CD4-positive, alpha-beta T cell (primary cell): ENCODE measurements at regions of chr6 and their contacts with region 1.

Region 1: DNA sequence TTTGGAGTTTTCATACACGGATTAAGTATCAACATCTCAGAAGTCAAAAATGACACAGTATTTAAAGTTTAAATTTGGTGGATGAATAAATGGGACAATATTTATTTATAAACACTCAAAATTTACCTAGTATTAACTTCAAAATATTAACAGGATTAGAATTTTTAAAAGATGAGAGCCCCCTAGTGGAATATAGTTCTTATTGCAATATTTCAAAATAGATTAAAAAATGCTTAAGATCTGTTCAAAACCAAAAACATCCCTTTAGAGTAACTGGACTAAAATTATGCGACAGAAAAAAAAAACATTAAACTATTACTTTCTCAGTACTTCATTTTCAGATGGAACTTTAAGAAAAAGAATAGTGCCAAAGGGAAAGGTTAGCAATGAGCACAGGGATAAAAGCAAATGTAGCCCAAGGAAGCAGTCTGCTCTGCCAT is 56.6 kb downstream of the SNX14 start:
- DNase-seq: peak in 2 of 14 experiments; percentile 3 to 26
- ATAC-seq: no peak
- H3K4me3 ChIP-seq: no peak overlapping the region
- H3K4me3 Mint-ChIP-seq: no peak overlapping the region
- H3K27ac ChIP-seq: no peak overlapping the region
- H3K27ac Mint-ChIP-seq: no peak overlapping the region
- H3K4me1 ChIP-seq: no peaks in the 10 kb centered on the region
- H3K4me1 Mint-ChIP-seq: no peaks in the 10 kb centered on the region
- H3K27me3 ChIP-seq: no peaks in the 10 kb centered on the region
- H3K27me3 Mint-ChIP-seq: no peaks in the 10 kb centered on the region
- CTCF ChIP-seq: peak; percentile 88

Region 2: DNA sequence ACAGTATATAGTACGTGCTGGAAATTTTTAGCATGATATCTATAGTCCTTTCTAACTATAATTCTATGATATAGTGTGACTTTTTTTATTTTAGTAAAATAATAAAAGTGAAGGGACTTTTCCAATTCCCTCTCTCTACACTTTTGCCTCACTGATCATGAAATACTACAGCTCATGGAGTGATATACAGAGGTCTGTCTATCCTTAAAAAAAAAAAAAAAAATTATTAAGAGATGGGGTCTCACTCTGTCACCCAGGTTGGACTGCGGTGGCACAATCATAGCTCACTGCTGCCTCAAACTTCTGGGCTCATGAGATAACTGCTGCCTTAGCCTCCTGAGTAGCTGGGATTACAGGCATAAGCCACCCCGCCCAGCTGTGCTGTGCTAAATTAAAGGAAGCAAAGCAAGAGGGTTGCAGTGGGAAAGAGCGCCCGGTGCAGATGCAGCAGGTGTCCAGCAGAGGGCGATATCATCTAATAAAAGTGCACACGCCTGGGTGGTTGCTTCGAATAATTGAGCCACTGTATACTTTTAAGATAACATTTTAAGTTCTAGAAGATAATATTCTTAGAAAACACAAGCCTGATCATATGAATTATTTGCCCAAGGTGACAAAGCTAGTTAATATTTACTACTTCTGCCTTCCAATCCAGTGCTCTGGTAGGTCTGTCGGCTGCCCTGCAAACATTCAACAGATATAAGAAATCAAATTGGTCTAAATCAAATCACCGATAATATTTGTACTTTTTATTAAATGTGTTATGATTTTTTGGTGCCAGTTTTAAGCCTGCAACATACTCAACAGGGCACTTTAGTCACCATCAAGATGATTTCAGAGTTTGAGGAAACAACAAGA is 182.1 kb before region 1 on chr6:
- CTCF ChIA-PET with region 1: no interaction called
- POLR2A ChIA-PET with region 1: no interaction called
- intact Hi-C with region 1: loop called (anchors 2 to 5 kb)
- DNase-seq: peak; percentile 12 to 64 (median 35)
- ATAC-seq: peak; percentile 49
- H3K4me3 ChIP-seq: no peak overlapping the region
- H3K4me3 Mint-ChIP-seq: no peak overlapping the region
- H3K27ac ChIP-seq: no peak overlapping the region
- H3K27ac Mint-ChIP-seq: no peak overlapping the region
- H3K4me1 ChIP-seq: no peaks in the 10 kb centered on the region
- H3K4me1 Mint-ChIP-seq: no peaks in the 10 kb centered on the region
- H3K27me3 ChIP-seq: no peaks in the 10 kb centered on the region
- H3K27me3 Mint-ChIP-seq: no peaks in the 10 kb centered on the region
- CTCF ChIP-seq: peak; percentile 96

Region 3: DNA sequence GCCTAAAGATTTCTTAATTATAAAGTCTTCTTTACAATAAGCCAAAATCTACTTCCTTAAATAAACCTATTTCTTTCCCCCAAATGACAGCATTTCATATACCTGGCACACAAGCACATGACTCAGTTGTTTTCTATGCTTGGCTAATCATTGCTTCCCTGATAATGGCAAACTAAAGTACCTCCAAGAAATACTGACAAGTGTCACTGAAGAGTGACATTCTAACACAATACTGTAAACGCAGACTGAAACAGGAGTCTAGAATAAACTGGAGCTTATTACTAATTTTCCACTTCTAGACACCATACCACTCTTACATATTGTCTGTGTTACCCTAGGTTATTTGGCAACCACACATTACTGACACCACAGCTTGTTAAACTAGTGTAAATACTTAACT is 91.3 kb after region 1 on chr6:
- CTCF ChIA-PET with region 1: no interaction called
- POLR2A ChIA-PET with region 1: no interaction called
- intact Hi-C with region 1: no loop called
- DNase-seq: no peak
- ATAC-seq: no peak
- H3K4me3 ChIP-seq: no peak overlapping the region
- H3K4me3 Mint-ChIP-seq: no peak overlapping the region
- H3K27ac ChIP-seq: no peak overlapping the region
- H3K27ac Mint-ChIP-seq: peak overlapping the region; percentile 41
- H3K4me1 ChIP-seq: peaks cover 10% of the 10 kb centered on the region
- H3K4me1 Mint-ChIP-seq: peaks cover 77% of the 10 kb centered on the region
- H3K27me3 ChIP-seq: no peaks in the 10 kb centered on the region
- H3K27me3 Mint-ChIP-seq: no peaks in the 10 kb centered on the region
- CTCF ChIP-seq: no peak

Region 4: GRCh38 chr6:85669735-85670194 is 132.7 kb after region 1 on chr6:
- CTCF ChIA-PET with region 1: no interaction called
- POLR2A ChIA-PET with region 1: no interaction called
- intact Hi-C with region 1: loop called in 1 of 2 experiments (anchors 5 kb)
- DNase-seq: peak; percentile 7 to 83 (median 33)
- ATAC-seq: peak; percentile 94
- H3K4me3 ChIP-seq: no peak overlapping the region
- H3K4me3 Mint-ChIP-seq: peak overlapping the region; percentile 28
- H3K27ac ChIP-seq: peak overlapping the region; percentile 50 to 69
- H3K27ac Mint-ChIP-seq: peak overlapping the region; percentile 89
- H3K4me1 ChIP-seq: peaks cover 22% of the 10 kb centered on the region
- H3K4me1 Mint-ChIP-seq: peaks cover 57% of the 10 kb centered on the region
- H3K27me3 ChIP-seq: no peaks in the 10 kb centered on the region
- H3K27me3 Mint-ChIP-seq: no peaks in the 10 kb centered on the region
- CTCF ChIP-seq: no peak